ENCODE measurements at regions of chr4 and their contacts with region 1.

Region 1: DNA sequence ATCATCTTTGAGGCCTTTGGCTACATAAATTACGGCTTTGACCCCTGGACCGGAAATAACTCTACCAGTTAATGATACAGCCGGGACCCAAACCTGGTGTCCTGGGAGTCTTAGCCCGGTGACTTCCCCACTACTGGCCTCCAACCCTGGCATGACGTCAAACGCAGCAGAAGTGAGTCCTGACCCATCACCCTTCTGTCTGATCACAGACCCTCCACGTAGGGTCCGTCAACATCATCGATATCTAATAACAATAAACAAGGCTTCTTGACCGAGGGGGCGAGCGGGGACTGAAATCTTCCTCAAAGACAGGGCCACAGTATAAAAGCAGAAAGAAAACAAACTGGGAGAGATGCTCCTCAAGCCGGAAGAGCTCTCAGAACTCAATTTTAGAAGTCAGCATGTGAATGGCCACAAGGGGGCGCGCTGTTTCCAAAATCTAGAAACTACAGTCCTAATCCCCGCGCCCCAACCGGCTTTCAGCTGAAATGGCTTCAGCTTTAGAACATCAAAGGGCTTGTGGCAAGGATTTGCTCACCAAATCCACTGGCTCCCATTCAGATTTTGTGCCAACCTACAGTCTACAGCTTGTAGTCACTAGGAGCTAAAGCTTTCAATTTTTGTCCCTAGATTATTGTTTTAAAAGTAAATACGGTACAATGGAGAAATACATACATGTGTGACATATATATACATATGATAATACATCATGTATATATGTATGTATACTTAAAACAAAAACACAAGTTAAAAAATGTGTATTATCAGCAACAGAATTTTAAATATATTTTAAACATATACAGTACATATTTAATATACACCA is 46.4 kb upstream of the ENPP6 start:
- DNase-seq: peak; percentile 96
- H3K4me3 ChIP-seq: no peak overlapping the region
- H3K27ac ChIP-seq: no peak overlapping the region
- H3K4me1 ChIP-seq: peaks cover 23% of the 10 kb centered on the region
- H3K27me3 ChIP-seq: no peaks in the 10 kb centered on the region
- CTCF ChIP-seq: peak; percentile 90

Region 2: GRCh38 chr4:183887351-183887750 is 376.8 kb before region 1 on chr4:
- CTCF ChIA-PET with region 1: no interaction called
- POLR2A ChIA-PET with region 1: no interaction called
- intact Hi-C with region 1: no loop called
- DNase-seq: no peak
- H3K4me3 ChIP-seq: no peak overlapping the region
- H3K27ac ChIP-seq: no peak overlapping the region
- H3K4me1 ChIP-seq: no peaks in the 10 kb centered on the region
- H3K27me3 ChIP-seq: no peaks in the 10 kb centered on the region
- CTCF ChIP-seq: no peak

Region 3: DNA sequence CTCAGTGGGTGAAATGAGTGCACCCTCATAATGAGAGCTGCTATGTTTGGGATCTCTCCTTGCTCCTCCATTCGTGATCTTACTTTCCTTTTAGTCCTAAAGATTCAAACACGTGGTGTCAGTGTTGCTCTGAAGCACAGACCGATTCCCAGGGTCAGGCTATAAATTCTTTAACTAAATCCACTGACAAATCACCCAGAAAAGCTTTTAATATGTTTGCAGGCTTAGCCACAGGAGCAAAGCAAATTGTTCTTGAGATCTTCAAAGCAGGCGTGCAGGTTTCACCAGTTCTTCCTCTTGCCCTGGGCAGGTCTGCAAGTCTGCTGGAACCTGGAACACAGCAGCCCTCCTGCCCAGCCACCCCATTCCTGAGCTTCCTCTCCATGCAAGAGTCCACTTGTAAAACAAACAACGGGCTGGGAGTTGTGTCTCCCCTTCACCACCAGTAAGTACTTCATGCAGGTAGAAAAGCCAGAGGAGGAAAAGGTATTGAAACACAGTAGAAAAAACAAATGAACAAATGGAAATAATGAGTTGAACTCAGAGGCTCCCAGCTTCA is 23.7 kb after region 1 on chr4:
- CTCF ChIA-PET with region 1: no interaction called
- POLR2A ChIA-PET with region 1: no interaction called
- intact Hi-C with region 1: no loop called
- DNase-seq: peak; percentile 55
- H3K4me3 ChIP-seq: no peak overlapping the region
- H3K27ac ChIP-seq: no peak overlapping the region
- H3K4me1 ChIP-seq: peaks cover 7% of the 10 kb centered on the region
- H3K27me3 ChIP-seq: no peaks in the 10 kb centered on the region
- CTCF ChIP-seq: peak; percentile 40; the same call in 1 of the 2 replicates

Region 4: DNA sequence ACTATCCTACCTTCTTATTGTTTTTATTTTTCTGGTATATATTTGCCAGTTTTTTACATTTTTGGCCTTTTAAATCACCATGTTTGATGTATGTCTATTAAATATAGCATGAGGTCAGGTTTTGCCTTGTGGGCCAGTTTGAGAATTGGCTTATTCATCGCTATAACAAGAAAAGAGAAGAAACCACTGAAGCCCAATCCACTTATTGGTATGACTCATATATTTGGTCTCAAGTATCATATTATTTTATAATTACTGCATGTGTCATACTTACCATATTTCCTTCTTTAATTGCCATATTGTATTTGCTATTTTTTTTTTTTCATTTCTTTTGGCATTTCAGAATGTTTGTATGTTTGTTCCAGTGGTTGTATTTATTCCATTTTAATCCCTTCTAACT is 110.9 kb after region 1 on chr4:
- CTCF ChIA-PET with region 1: interaction called, 3 read pairs
- POLR2A ChIA-PET with region 1: no interaction called
- intact Hi-C with region 1: loop called (anchors 1 kb)
- DNase-seq: no peak
- H3K4me3 ChIP-seq: no peak overlapping the region
- H3K27ac ChIP-seq: no peak overlapping the region
- H3K4me1 ChIP-seq: peaks cover 20% of the 10 kb centered on the region
- H3K27me3 ChIP-seq: no peaks in the 10 kb centered on the region
- CTCF ChIP-seq: no peak

Region 5: GRCh38 chr4:184538023-184538599 is 274.0 kb after region 1 on chr4:
- CTCF ChIA-PET with region 1: interaction called, 8 read pairs
- POLR2A ChIA-PET with region 1: no interaction called
- intact Hi-C with region 1: loop called (anchors 1 kb)
- DNase-seq: peak; percentile 90
- H3K4me3 ChIP-seq: peak overlapping the region; percentile 78
- H3K27ac ChIP-seq: peak overlapping the region; percentile 92
- H3K4me1 ChIP-seq: peaks cover 20% of the 10 kb centered on the region
- H3K27me3 ChIP-seq: no peaks in the 10 kb centered on the region
- CTCF ChIP-seq: peak; percentile 65

Region 6: DNA sequence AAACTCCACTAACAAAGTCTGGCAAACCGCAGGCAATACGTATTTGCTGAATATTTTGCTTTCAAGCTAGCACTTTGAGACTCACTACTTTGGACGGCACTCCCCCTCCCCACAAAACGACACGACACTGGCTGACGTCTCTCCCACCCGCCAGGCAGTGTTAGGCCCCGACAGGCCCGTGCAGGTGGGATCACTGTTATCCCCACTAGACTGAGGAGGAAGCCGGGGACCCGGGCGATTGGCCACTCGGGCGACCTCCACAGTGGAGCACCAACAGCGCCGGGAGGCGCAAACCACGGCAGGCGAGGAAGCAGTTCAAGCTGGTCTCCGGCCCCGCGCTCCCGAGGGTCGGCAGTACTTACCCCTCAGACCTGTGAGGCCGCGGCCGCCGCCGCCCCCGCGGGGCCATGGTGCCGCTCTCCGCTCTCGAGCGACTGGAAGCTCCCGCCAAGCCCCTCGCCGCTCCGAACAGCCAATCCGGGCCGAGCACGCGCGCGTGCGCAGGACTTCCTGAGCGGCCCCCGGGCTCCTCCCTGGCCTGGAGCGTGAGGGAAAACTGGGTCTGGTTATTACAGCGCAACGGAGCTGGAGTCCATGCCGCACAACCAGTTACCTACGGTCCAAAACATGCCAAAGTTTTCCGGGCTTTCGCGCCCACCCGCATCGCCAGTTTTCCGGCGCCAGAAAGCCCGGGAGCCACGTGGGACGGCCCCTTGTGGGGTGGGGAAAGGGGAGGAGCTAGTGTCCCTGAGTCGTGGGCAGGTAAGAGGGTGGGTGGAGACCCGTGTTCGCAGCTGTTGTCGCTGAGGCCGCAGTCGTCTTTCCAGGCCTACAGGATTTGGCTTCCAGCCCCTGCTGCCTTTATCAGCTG is 469.8 kb after region 1 on chr4 and contains the start of gene CENPU:
- CTCF ChIA-PET with region 1: no interaction called
- POLR2A ChIA-PET with region 1: no interaction called
- intact Hi-C with region 1: loop called (anchors 10 kb)
- DNase-seq: peak; percentile 99
- H3K4me3 ChIP-seq: peak within 1 kb of the TSS; percentile 74
- H3K27ac ChIP-seq: peak within 1 kb of the TSS; percentile 88
- H3K4me1 ChIP-seq: peaks cover 19% of the 10 kb centered on the region
- H3K27me3 ChIP-seq: no peaks in the 10 kb centered on the region
- CTCF ChIP-seq: no peak
- total RNA-seq, gene CENPU: 87.3 and 97.2 TPM in 2 replicates

Region 7: GRCh38 chr4:185096032-185096653 is 832.0 kb after region 1 on chr4:
- CTCF ChIA-PET with region 1: interaction called, 16 read pairs
- POLR2A ChIA-PET with region 1: interaction called, 3 read pairs
- intact Hi-C with region 1: no loop called
- DNase-seq: peak; percentile 58
- H3K4me3 ChIP-seq: no peak overlapping the region
- H3K27ac ChIP-seq: no peak overlapping the region
- H3K4me1 ChIP-seq: no peaks in the 10 kb centered on the region
- H3K27me3 ChIP-seq: no peaks in the 10 kb centered on the region
- CTCF ChIP-seq: peak; percentile 68

Measured in A673 (cell line).